ENCODE measurements at regions of chr1 and their contacts with region 1.

Region 1: GRCh38 chr1:113742515-113742914 is 16.8 kb downstream of the PHTF1 start:
- DNase-seq: no peak
- H3K4me3 ChIP-seq: no peak overlapping the region
- H3K27ac ChIP-seq: no peak overlapping the region
- H3K4me1 ChIP-seq: no peaks in the 10 kb centered on the region
- H3K27me3 ChIP-seq: no peaks in the 10 kb centered on the region
- CTCF ChIP-seq: no peak

Region 2: GRCh38 chr1:113714606-113715275 is 27.8 kb before region 1 on chr1:
- CTCF ChIA-PET with region 1: no interaction called
- POLR2A ChIA-PET with region 1: interaction called, 10 read pairs
- intact Hi-C with region 1: no loop called
- DNase-seq: no peak
- H3K4me3 ChIP-seq: no peak overlapping the region
- H3K27ac ChIP-seq: no peak overlapping the region
- H3K4me1 ChIP-seq: no peaks in the 10 kb centered on the region
- H3K27me3 ChIP-seq: no peaks in the 10 kb centered on the region
- CTCF ChIP-seq: no peak

Region 3: DNA sequence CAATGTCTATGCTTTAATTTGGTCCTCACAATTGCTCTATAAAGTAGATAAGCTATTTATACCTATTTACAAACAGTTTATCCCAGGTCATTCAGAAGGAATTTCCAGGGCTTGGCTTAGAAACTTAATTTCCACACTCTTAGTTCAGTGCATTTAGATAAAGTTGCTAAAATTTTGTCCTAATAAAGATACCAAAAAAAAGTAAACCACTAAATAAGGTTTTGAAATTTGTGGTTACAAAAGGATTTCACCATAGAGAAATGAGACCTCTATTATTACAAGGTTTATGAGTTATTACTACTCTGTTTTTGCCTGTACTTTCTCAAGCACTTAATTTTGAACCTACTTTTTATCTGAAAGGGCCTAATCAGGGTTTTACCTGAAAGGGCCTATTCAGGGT is 106.5 kb after region 1 on chr1:
- CTCF ChIA-PET with region 1: no interaction called
- POLR2A ChIA-PET with region 1: no interaction called
- intact Hi-C with region 1: no loop called
- DNase-seq: no peak
- H3K4me3 ChIP-seq: no peak overlapping the region
- H3K27ac ChIP-seq: peak overlapping the region; percentile 96
- H3K4me1 ChIP-seq: peaks cover 20% of the 10 kb centered on the region
- H3K27me3 ChIP-seq: no peaks in the 10 kb centered on the region
- CTCF ChIP-seq: no peak

Measured in A673 (cell line).